Breast epithelium (tissue), 4 donors: ENCODE measurements at regions of chr20 and their contacts with region 1.

Region 1: DNA sequence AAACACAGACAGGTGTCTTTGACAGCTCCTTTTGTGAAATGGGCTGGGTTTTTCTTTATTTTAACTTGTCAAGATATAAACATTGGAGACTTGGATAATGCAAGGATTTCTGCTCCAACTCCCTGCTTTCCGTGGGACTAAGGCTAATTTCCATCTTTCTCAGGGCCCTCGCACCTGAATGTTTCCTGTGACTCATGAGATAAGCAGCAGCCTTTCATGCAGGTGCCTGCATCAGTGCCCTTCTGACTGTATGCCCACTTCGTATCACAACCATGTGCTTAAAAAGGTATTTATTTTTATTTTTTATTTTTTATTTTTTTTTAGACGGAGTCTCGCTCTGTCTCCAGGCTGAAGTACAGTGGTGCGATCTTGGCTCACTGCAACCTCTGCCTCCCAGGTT is 736.1 kb downstream of the DOK5 start:
- DNase-seq: no peak
- H3K4me3 ChIP-seq: no peak overlapping the region
- H3K27ac ChIP-seq: no peak overlapping the region
- H3K4me1 ChIP-seq: no peaks in the 10 kb centered on the region
- H3K27me3 ChIP-seq: no peaks in the 10 kb centered on the region
- CTCF ChIP-seq: no peak
- POLR2A ChIP-seq: no peak

Region 2: GRCh38 chr20:55009066-55009465 is 202.4 kb before region 1 on chr20:
- intact Hi-C with region 1: no loop called
- DNase-seq: no peak
- H3K4me3 ChIP-seq: no peak overlapping the region
- H3K27ac ChIP-seq: no peak overlapping the region
- H3K4me1 ChIP-seq: no peaks in the 10 kb centered on the region
- H3K27me3 ChIP-seq: no peaks in the 10 kb centered on the region
- CTCF ChIP-seq: no peak
- POLR2A ChIP-seq: no peak

Region 3: GRCh38 chr20:55079917-55080316 is 131.6 kb before region 1 on chr20:
- intact Hi-C with region 1: loop called (anchors 5 kb)
- DNase-seq: no peak
- H3K4me3 ChIP-seq: no peak overlapping the region
- H3K27ac ChIP-seq: no peak overlapping the region
- H3K4me1 ChIP-seq: no peaks in the 10 kb centered on the region
- H3K27me3 ChIP-seq: no peaks in the 10 kb centered on the region
- CTCF ChIP-seq: no peak
- POLR2A ChIP-seq: no peak

Region 4: GRCh38 chr20:55175081-55175480 is 36.4 kb before region 1 on chr20:
- intact Hi-C with region 1: no loop called
- DNase-seq: no peak
- H3K4me3 ChIP-seq: no peak overlapping the region
- H3K27ac ChIP-seq: no peak overlapping the region
- H3K4me1 ChIP-seq: no peaks in the 10 kb centered on the region
- H3K27me3 ChIP-seq: no peaks in the 10 kb centered on the region
- CTCF ChIP-seq: no peak
- POLR2A ChIP-seq: no peak

Region 5: GRCh38 chr20:56069016-56069415 is 857.5 kb after region 1 on chr20:
- intact Hi-C with region 1: loop called (anchors 5 kb)
- DNase-seq: no peak
- H3K4me3 ChIP-seq: no peak overlapping the region
- H3K27ac ChIP-seq: no peak overlapping the region
- H3K4me1 ChIP-seq: no peaks in the 10 kb centered on the region
- H3K27me3 ChIP-seq: no peaks in the 10 kb centered on the region
- CTCF ChIP-seq: no peak
- POLR2A ChIP-seq: no peak